ENCODE measurements at regions of chr3 and their contacts with region 1.

Region 1: DNA sequence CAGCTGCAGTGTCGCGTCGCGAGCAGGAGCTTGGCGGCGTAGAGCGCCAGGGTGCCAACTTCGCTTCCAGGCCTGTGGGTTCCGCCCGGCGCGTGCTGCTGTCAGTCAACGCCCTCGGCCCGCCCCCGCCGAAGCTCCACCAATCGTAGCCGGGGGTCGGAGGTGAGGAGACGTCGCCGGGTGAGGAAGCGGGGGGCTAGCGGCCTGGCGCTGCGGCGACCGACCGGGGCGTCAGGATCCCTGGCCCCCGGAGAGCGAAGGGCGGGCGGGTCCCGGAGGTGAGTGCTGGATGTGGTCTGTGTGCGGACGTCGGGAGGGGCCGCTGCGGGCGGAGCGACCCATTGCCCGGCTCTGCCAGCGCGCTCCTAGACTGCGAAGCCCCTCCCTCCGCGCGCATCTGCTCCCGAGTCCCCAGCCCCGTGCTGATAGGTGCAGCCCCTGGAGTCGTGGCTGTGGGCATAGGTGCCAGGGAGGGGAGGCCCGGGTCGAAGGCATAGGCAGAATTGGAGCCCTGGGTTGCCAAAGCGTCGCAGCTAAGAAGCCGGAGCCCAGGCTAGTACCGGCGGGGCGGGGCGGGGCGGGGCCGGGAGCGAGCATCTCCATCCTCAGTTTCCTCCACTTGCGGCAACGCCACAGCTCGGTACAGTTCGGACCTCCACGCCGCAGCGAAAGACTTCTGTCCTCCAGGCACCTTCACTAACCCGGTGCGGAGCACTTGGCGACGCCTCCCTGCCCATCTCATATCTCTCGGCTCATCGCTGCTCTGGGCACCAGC is at the start of gene NXPE3:
- DNase-seq: peak; percentile 92 to 96 (median 93)
- ATAC-seq: peak; percentile 87 to 98 (median 96)
- H3K4me3 ChIP-seq: peak within 1 kb of the TSS; percentile 71 to 97 (median 88)
- H3K27ac ChIP-seq: peak within 1 kb of the TSS; percentile 68 to 95 (median 89)
- H3K4me1 ChIP-seq: peaks cover 0 to 31% (median 19%) of the 10 kb centered on the region in 12 donors
- H3K27me3 ChIP-seq: no peaks in the 10 kb centered on the region
- CTCF ChIP-seq: peak in 1 of 12 donors; percentile 7
- POLR2A ChIP-seq: peak in 1 of 2 donors; percentile 70
- total RNA-seq, gene NXPE3: 24.0 to 43.8 (median 36.4) TPM

Region 2: DNA sequence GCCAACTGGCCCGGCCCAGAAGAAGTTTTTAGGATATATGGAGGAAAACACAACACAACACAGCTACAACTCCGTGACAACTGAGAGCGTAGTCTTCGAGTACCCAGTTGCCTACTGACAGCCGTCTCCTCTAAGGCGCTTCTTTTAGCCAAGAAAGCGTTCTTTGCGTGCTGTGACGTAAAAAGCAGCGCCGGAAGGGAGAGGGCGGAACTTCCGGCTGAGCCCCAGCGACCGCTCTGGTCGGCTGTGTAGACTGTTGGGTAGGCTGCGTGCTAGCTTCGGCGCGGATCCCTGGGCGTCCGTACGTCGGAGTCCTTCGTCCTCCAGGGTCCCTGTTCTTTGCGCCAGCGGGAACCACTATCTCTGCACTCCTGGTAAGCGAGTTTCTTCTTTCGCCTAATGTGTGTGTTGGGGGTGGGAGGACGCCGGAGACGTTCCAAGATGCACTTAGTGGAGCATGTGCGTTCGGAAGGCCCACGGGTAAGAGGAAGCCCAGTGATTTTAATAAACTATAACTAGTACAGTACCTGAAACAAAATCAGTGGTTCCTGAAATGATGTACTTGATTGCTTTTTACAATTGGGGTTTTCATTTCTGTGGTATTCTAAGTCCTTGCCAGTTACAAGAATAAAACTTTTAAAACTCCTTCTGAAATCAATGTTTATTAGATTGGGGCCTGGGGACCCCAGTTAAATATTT is 217.5 kb before region 1 on chr3 and contains the start of gene TRMT10C:
- intact Hi-C with region 1: loop called in 1 of 10 experiments (anchors 10 kb)
- DNase-seq: peak; percentile 89 to 94 (median 92)
- ATAC-seq: peak; percentile 96 to 99 (median 99)
- H3K4me3 ChIP-seq: peak within 1 kb of the TSS; percentile 42 to 93 (median 76)
- H3K27ac ChIP-seq: peak within 1 kb of the TSS; percentile 45 to 93 (median 85)
- H3K4me1 ChIP-seq: peaks cover 0 to 29% (median 15%) of the 10 kb centered on the region in 12 donors
- H3K27me3 ChIP-seq: peaks cover 0 to 22% (median 0%) of the 10 kb centered on the region in 9 donors
- CTCF ChIP-seq: no peak
- POLR2A ChIP-seq: peak in 1 of 2 donors; percentile 78
- total RNA-seq, gene TRMT10C: 24.5 to 27.6 (median 26.4) TPM

Region 3: DNA sequence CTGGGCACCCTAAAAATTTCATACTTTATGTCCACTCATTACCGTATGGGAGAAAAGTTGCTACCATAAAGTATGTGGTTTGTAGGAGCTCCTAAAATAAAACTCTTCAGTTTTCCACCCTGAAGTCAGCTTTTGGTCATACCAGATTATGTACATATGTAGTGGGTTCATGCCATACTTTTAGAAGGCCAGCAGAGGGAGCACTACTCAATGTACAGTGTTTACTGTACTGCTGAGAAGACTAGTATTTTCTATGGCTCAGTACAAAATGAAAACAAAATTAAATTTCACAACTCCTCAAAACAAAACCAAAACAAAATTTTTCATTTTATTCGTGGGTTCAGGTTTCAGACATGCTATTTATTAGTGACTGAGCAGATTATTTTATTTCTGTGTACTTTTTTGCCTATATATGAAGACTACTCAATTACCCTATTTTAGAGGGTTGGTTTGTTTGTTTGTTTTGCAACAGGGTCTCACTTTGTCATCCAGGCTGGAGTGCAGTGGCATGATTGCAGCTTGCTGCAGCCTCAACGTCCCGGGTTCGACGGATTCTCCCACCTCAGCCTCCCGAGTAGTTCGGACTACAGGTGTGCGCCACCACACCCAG is 24.0 kb after region 1 on chr3:
- intact Hi-C with region 1: no loop called
- DNase-seq: peak in 2 of 5 donors; percentile 54 to 60
- ATAC-seq: peak; percentile 83 to 94 (median 88)
- H3K4me3 ChIP-seq: no peak overlapping the region
- H3K27ac ChIP-seq: peak overlapping the region in 1 of 12 donors; percentile 5
- H3K4me1 ChIP-seq: peaks cover 0 to 5% (median 0%) of the 10 kb centered on the region in 12 donors
- H3K27me3 ChIP-seq: no peaks in the 10 kb centered on the region
- CTCF ChIP-seq: peak; percentile 74 to 95 (median 87)
- POLR2A ChIP-seq: no peak

Region 4: GRCh38 chr3:102053375-102053989 is 274.2 kb after region 1 on chr3:
- intact Hi-C with region 1: no loop called
- DNase-seq: no peak
- ATAC-seq: peak in 1 of 4 donors; percentile 16
- H3K4me3 ChIP-seq: no peak overlapping the region
- H3K27ac ChIP-seq: no peak overlapping the region
- H3K4me1 ChIP-seq: peaks cover 0 to 4% (median 0%) of the 10 kb centered on the region in 12 donors
- H3K27me3 ChIP-seq: no peaks in the 10 kb centered on the region
- CTCF ChIP-seq: no peak
- POLR2A ChIP-seq: no peak

Measured in heart left ventricle (tissue), 16 donors.